ENCODE measurements at regions of chr4 and their contacts with region 1.

Region 1: GRCh38 chr4:83074086-83074704 is 39.2 kb downstream of the COPS4 start:
- H3K4me3 Mint-ChIP-seq: no peak overlapping the region
- H3K27ac Mint-ChIP-seq: no peak overlapping the region
- H3K4me1 Mint-ChIP-seq: peaks cover 21% of the 10 kb centered on the region
- H3K27me3 Mint-ChIP-seq: no peaks in the 10 kb centered on the region

Region 2: GRCh38 chr4:82694046-82694445 is 380.1 kb before region 1 on chr4:
- intact Hi-C with region 1: no loop called
- H3K4me3 Mint-ChIP-seq: no peak overlapping the region
- H3K27ac Mint-ChIP-seq: no peak overlapping the region
- H3K4me1 Mint-ChIP-seq: no peaks in the 10 kb centered on the region
- H3K27me3 Mint-ChIP-seq: no peaks in the 10 kb centered on the region

Region 3: GRCh38 chr4:83109421-83110222 is 35.4 kb after region 1 on chr4:
- intact Hi-C with region 1: loop called (anchors 1 kb)
- H3K4me3 Mint-ChIP-seq: peak overlapping the region; percentile 82
- H3K27ac Mint-ChIP-seq: peak overlapping the region; percentile 85
- H3K4me1 Mint-ChIP-seq: peaks cover 26% of the 10 kb centered on the region
- H3K27me3 Mint-ChIP-seq: no peaks in the 10 kb centered on the region

Region 4: GRCh38 chr4:83217721-83218522 is 143.7 kb after region 1 on chr4:
- intact Hi-C with region 1: no loop called
- H3K4me3 Mint-ChIP-seq: peak overlapping the region; percentile 33
- H3K27ac Mint-ChIP-seq: peak overlapping the region; percentile 73
- H3K4me1 Mint-ChIP-seq: peaks cover 45% of the 10 kb centered on the region
- H3K27me3 Mint-ChIP-seq: no peaks in the 10 kb centered on the region

Region 5: GRCh38 chr4:83252782-83253405 is 178.7 kb after region 1 on chr4:
- intact Hi-C with region 1: loop called (anchors 2 kb)
- H3K4me3 Mint-ChIP-seq: no peak overlapping the region
- H3K27ac Mint-ChIP-seq: no peak overlapping the region
- H3K4me1 Mint-ChIP-seq: peaks cover 26% of the 10 kb centered on the region
- H3K27me3 Mint-ChIP-seq: no peaks in the 10 kb centered on the region